ENCODE measurements at regions of chr16 and their contacts with region 1.

Region 1: DNA sequence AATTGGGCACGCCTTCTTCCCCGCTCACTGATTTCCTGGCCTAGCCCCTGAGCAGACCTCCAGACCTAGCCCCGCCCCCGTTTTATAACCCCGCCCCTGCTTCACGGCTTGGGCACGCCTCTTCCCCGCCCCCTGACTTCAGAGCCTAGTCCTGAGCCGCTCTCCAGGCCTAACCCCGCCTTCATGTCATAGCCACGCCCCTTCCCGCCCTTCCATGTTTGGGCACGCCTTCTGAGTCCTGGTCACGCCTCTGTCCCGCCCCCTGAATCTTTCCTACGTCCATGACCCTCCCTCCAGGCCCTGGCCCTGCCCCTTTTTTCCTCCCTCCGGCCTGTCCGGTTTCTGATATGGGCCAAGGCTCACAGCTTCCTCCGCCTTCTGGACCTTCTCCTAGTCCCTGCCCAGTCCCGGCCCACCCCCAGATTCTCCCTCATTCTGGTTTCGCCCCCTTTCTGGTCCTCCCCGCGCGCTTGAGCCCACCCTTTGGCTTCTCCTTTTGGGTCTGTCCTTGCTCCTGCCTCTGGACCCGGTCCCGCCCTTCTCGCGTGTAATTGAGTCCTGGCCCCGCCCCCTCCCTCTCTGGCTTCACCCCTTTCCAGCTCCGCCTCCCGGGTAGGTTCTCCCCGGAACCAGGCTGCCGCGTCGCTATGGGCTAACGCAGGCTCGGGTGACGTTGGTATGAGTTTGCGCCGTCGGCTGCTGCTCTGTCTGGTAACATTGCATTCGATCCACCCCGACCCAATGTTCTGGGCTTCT is 15.1 kb upstream of the EEF2K start:
- DNase-seq: peak; percentile 90 to 98 (median 93)
- ATAC-seq: peak; percentile 84
- H3K4me3 ChIP-seq: peak overlapping the region; percentile 59
- H3K27ac ChIP-seq: peak overlapping the region; percentile 96
- H3K4me1 ChIP-seq: peaks cover 25 to 32% of the 10 kb centered on the region in 2 experiments; a peak in 4 of 5 replicates
- H3K27me3 ChIP-seq: no peaks in the 10 kb centered on the region; a peak in 1 of 5 replicates
- CTCF ChIP-seq: 0 out of 6 replicates have a peak, but pooled peaks of 1 of the 3 experiments have one; percentile 2
- EP300 ChIP-seq: no peak
- POLR2A ChIP-seq: peak; percentile 94
- RAD21 ChIP-seq: no peak

Region 2: DNA sequence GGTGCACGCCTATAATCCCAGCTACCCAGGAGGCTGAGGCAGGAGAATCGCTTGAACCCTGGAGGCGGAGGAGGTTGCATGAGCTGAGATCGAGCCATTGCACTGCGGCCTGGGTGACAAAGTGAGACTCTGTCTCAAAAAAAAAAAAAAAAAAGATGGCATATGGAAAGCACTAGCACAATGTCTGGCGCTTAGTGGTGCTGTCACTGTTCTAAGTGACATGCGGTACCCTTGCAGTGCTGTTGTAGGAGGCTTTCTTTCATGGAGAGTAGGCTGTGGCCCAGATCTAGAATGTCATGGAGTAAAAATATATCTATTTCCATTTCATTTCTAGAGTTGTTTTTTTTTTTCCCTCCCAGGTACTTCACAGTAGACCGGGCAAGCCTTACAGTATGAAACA is 606.1 kb before region 1 on chr16:
- CTCF ChIA-PET with region 1: no interaction called
- POLR2A ChIA-PET with region 1: no interaction called
- in situ Hi-C with region 1: loop called (anchors 10 kb)
- intact Hi-C with region 1: no loop called
- DNase-seq: no peak
- ATAC-seq: no peak
- H3K4me3 ChIP-seq: no peak overlapping the region
- H3K27ac ChIP-seq: no peak overlapping the region
- H3K4me1 ChIP-seq: no peaks in the 10 kb centered on the region
- H3K27me3 ChIP-seq: peaks cover 2 to 6% of the 10 kb centered on the region in 2 experiments; a peak in 3 of 5 replicates
- CTCF ChIP-seq: no peak
- EP300 ChIP-seq: no peak
- POLR2A ChIP-seq: no peak
- RAD21 ChIP-seq: no peak

Region 3: DNA sequence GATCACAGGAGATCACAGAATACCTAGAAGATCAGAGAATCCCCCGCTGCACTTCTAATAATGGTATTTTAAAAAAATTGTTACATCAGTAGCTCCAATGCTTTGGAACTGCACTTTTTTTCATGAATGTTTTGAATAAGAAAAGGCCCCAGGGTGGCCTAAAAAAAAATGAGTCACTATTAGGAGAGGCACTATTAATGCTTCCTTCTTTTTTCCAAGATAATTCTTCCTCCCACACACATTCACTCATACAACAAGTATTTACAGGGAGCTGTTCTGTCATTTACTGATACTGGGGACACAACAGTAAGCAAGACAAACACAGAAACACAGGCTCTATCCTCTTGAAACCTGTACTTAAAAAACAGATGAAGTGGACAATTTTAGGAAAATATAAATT is 189.4 kb before region 1 on chr16:
- CTCF ChIA-PET with region 1: interaction called, 10 read pairs
- POLR2A ChIA-PET with region 1: interaction called, 3 read pairs
- in situ Hi-C with region 1: no loop called
- intact Hi-C with region 1: loop called (anchors 1 kb)
- DNase-seq: peak in 1 of 4 experiments; percentile 20
- ATAC-seq: no peak
- H3K4me3 ChIP-seq: no peak overlapping the region
- H3K27ac ChIP-seq: no peak overlapping the region
- H3K4me1 ChIP-seq: peaks cover 5 to 6% of the 10 kb centered on the region in 2 experiments; a peak in 3 of 5 replicates
- H3K27me3 ChIP-seq: peaks cover 0 to 4% of the 10 kb centered on the region in 2 experiments; a peak in 2 of 5 replicates
- CTCF ChIP-seq: no peak
- EP300 ChIP-seq: no peak
- POLR2A ChIP-seq: no peak
- RAD21 ChIP-seq: no peak

Region 4: DNA sequence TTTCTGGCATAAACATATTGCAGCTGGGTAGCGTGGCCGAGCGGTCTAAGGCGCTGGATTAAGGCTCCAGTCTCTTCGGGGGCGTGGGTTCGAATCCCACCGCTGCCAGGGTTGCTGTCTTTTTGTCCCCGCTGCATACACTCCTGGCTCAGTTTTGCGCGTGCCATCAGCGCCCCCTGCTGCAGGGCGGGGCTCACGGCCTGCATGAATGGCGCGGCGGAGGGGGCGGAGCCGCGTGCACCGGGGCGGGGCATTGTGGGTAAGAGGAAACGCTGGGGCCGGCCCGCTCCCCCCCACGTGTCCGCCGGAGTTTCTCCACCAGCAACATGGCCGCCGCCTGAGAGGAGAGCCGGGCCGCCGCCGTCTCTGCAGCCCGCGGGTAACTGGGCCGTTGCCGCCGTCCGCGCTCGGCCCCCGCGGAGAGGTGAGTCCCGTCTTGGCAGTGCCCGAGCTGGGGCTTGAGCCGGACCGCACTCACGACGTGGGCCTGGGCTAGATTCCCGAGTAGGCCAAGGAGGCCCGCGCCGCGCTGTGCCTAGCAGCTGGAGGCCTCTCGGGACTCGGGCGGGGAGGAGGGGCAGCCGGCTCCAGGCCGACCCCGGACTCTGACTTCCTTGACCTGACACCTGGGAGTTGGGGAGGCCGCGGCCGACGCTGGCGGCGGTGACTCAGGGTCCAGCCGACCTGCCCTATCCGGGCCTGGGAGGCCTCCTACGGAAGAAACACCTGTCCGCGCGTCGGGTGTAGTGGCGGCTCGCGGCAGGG is 106.3 kb after region 1 on chr16 and contains the start of gene POLR3E:
- CTCF ChIA-PET with region 1: interaction called, 49 read pairs
- POLR2A ChIA-PET with region 1: interaction called, 13 read pairs
- in situ Hi-C with region 1: no loop called
- intact Hi-C with region 1: loop called (anchors 1 kb)
- DNase-seq: peak; percentile 95 to 99 (median 96)
- ATAC-seq: peak; percentile 90
- H3K4me3 ChIP-seq: peak within 1 kb of the TSS; percentile 96
- H3K27ac ChIP-seq: peak within 1 kb of the TSS; percentile 89
- H3K4me1 ChIP-seq: peaks cover 15% of the 10 kb centered on the region in 2 experiments; a peak in 4 of 5 replicates
- H3K27me3 ChIP-seq: no peaks in the 10 kb centered on the region
- CTCF ChIP-seq: peak; percentile 87 to 98 (median 94)
- EP300 ChIP-seq: peak; percentile 76
- POLR2A ChIP-seq: peak; percentile 83
- RAD21 ChIP-seq: peak; percentile 99
- polyA plus RNA-seq, gene POLR3E: 17.7 to 25.3 TPM

Region 5: DNA sequence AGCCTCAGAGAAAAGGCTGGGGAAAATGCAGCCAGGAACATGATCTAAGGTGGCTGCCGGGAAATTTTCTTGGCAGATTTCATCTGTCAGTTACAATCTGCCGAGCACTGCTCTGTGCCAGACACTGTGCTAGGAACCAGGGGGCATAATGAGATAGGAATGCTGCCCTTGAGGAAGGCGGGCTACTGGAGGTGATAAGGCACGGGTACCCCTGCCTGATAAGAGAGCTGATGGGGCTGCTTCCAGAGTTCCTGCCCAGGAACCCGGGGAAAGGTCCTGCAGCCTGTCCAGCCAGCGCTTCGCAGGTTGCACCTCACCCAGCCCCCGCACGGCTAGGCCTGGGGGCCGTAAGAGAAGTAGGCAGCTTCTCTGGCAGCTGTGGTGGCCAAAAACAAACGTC is 994.7 kb after region 1 on chr16:
- CTCF ChIA-PET with region 1: no interaction called
- POLR2A ChIA-PET with region 1: no interaction called
- in situ Hi-C with region 1: no loop called
- intact Hi-C with region 1: no loop called
- DNase-seq: no peak
- ATAC-seq: no peak
- H3K4me3 ChIP-seq: no peak overlapping the region
- H3K27ac ChIP-seq: no peak overlapping the region
- H3K4me1 ChIP-seq: peaks cover 0 to 13% of the 10 kb centered on the region in 2 experiments; a peak in 2 of 5 replicates
- H3K27me3 ChIP-seq: peaks cover 22 to 41% of the 10 kb centered on the region in 2 experiments; a peak in 4 of 5 replicates
- CTCF ChIP-seq: no peak
- EP300 ChIP-seq: no peak
- POLR2A ChIP-seq: no peak
- RAD21 ChIP-seq: no peak

Measured in K562 (cell line).